B cell (primary cell): ENCODE measurements at regions of chr9 and their contacts with region 1.

Region 1: DNA sequence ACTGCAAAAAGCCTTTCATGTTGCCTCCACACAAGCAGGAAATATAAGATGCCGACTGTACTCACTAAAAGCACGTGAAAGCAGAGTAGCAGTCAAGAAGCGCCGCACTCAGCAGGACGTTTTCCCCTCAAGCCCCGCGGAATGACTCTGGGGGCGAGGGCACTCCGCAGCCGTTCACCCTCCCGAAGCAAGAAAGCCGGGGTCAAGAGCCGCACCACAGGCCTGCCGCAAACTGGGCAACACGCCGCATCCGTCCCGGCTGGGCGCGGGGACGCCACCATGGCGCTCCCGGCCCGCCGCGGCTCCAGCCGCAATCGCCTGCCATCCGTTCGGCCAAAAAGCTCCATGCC is 364 bp downstream of the RPS6 start:
- DNase-seq: no peak
- ATAC-seq: peak; percentile 41
- H3K4me3 ChIP-seq: peak overlapping the region; percentile 66 to 84 (median 81)
- H3K4me3 Mint-ChIP-seq: peak overlapping the region; percentile 98
- H3K27ac ChIP-seq: peak overlapping the region; percentile 87 to 93
- H3K27ac Mint-ChIP-seq: peak overlapping the region; percentile 98
- H3K4me1 ChIP-seq: peaks cover 19 to 20% of the 10 kb centered on the region in 2 donors
- H3K4me1 Mint-ChIP-seq: peaks cover 40% of the 10 kb centered on the region
- H3K27me3 ChIP-seq: no peaks in the 10 kb centered on the region
- H3K27me3 Mint-ChIP-seq: no peaks in the 10 kb centered on the region
- CTCF ChIP-seq: no peak

Region 2: GRCh38 chr9:19102631-19103345 is 276.9 kb before region 1 on chr9 and contains the start of gene HAUS6:
- CTCF ChIA-PET with region 1: no interaction called
- POLR2A ChIA-PET with region 1: interaction called, 4 read pairs
- intact Hi-C with region 1: loop called (anchors 1 kb)
- DNase-seq: peak; percentile 96
- ATAC-seq: peak; percentile 95
- H3K4me3 ChIP-seq: peak within 1 kb of the TSS; percentile 63 to 92 (median 82)
- H3K4me3 Mint-ChIP-seq: peak within 1 kb of the TSS; percentile 98
- H3K27ac ChIP-seq: peak within 1 kb of the TSS; percentile 53 to 88
- H3K27ac Mint-ChIP-seq: peak within 1 kb of the TSS; percentile 94
- H3K4me1 ChIP-seq: peaks cover 3 to 16% of the 10 kb centered on the region in 2 donors
- H3K4me1 Mint-ChIP-seq: peaks cover 22% of the 10 kb centered on the region
- H3K27me3 ChIP-seq: no peaks in the 10 kb centered on the region
- H3K27me3 Mint-ChIP-seq: no peaks in the 10 kb centered on the region
- CTCF ChIP-seq: peak; percentile 38
- total RNA-seq, gene HAUS6: 13.5 and 14.6 TPM in 2 replicates

Region 3: DNA sequence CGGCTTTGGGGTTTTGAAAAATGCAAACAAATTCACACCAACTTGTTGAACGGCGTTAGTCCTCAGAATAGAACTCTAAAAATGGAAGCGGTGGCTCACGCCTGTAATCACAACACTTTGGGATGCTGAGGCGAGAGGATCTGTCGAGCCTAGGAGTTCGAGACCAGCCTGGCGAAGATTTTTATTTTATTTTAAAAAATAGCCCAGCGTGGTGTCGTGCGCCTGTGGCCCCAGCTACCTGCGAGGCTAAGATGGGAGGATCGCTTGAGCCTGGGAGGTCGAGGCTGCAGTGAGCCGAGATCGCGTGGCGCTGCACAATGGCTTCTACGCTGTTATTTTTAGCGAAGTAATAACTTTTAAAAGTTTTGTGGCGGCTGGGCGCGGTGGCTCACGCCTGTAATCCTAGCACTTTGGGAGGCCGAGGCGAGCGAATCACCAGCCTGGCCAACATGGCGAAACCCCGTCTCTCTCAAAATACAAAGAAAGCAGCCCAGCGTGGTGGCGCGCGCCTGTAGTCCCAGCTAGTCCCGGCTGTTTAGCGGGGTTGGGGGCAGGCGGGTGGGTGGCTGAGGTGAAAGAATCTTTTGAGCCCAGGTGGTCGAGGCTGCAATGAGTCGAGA is 251.7 kb before region 1 on chr9:
- CTCF ChIA-PET with region 1: no interaction called
- POLR2A ChIA-PET with region 1: interaction called, 4 read pairs
- intact Hi-C with region 1: loop called (anchors 2 kb)
- DNase-seq: no peak
- ATAC-seq: peak; percentile 10
- H3K4me3 ChIP-seq: peak overlapping the region; percentile 72 to 82 (median 77)
- H3K4me3 Mint-ChIP-seq: peak overlapping the region; percentile 96
- H3K27ac ChIP-seq: peak overlapping the region; percentile 66 to 67
- H3K27ac Mint-ChIP-seq: peak overlapping the region; percentile 88
- H3K4me1 ChIP-seq: peaks cover 5 to 26% of the 10 kb centered on the region in 2 donors
- H3K4me1 Mint-ChIP-seq: peaks cover 28% of the 10 kb centered on the region
- H3K27me3 ChIP-seq: no peaks in the 10 kb centered on the region
- H3K27me3 Mint-ChIP-seq: no peaks in the 10 kb centered on the region
- CTCF ChIP-seq: no peak

Region 4: GRCh38 chr9:19230356-19231125 is 149.1 kb before region 1 on chr9 and contains the start of gene DENND4C:
- CTCF ChIA-PET with region 1: no interaction called
- POLR2A ChIA-PET with region 1: interaction called, 12 read pairs
- intact Hi-C with region 1: loop called (anchors 1 kb)
- DNase-seq: peak; percentile 87
- ATAC-seq: peak; percentile 76
- H3K4me3 ChIP-seq: peak within 1 kb of the TSS; percentile 79 to 89 (median 83)
- H3K4me3 Mint-ChIP-seq: no peak within 1 kb of the TSS
- H3K27ac ChIP-seq: peak within 1 kb of the TSS; percentile 28 to 72
- H3K27ac Mint-ChIP-seq: peak within 1 kb of the TSS; percentile 88
- H3K4me1 ChIP-seq: peaks cover 23 to 27% of the 10 kb centered on the region in 2 donors
- H3K4me1 Mint-ChIP-seq: peaks cover 15% of the 10 kb centered on the region
- H3K27me3 ChIP-seq: no peaks in the 10 kb centered on the region
- H3K27me3 Mint-ChIP-seq: no peaks in the 10 kb centered on the region
- CTCF ChIP-seq: no peak
- total RNA-seq, gene DENND4C: 44.8 and 52.4 TPM in 2 replicates

Region 5: DNA sequence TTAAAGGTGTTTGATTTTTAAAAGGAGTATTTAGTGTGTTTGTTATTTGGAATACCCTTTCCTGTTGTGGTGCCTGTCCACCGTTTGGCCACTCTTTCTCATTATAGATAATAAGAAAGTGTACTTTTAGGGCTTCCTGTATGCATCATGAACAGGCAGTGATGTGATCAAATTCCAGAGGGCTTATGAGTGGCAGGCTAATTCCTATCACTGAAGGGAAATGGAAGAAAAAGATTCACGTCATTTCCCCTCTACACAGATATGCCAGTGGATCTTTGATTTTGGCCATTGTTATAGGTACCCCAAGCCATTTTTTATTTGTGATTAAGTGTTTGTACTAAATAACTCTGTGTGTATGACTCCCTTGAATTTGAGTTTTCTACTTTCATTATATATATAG is 36.7 kb before region 1 on chr9:
- CTCF ChIA-PET with region 1: no interaction called
- POLR2A ChIA-PET with region 1: no interaction called
- intact Hi-C with region 1: no loop called
- DNase-seq: no peak
- ATAC-seq: no peak
- H3K4me3 ChIP-seq: no peak overlapping the region
- H3K4me3 Mint-ChIP-seq: no peak overlapping the region
- H3K27ac ChIP-seq: no peak overlapping the region
- H3K27ac Mint-ChIP-seq: no peak overlapping the region
- H3K4me1 ChIP-seq: no peaks in the 10 kb centered on the region
- H3K4me1 Mint-ChIP-seq: no peaks in the 10 kb centered on the region
- H3K27me3 ChIP-seq: no peaks in the 10 kb centered on the region
- H3K27me3 Mint-ChIP-seq: no peaks in the 10 kb centered on the region
- CTCF ChIP-seq: no peak

Region 6: DNA sequence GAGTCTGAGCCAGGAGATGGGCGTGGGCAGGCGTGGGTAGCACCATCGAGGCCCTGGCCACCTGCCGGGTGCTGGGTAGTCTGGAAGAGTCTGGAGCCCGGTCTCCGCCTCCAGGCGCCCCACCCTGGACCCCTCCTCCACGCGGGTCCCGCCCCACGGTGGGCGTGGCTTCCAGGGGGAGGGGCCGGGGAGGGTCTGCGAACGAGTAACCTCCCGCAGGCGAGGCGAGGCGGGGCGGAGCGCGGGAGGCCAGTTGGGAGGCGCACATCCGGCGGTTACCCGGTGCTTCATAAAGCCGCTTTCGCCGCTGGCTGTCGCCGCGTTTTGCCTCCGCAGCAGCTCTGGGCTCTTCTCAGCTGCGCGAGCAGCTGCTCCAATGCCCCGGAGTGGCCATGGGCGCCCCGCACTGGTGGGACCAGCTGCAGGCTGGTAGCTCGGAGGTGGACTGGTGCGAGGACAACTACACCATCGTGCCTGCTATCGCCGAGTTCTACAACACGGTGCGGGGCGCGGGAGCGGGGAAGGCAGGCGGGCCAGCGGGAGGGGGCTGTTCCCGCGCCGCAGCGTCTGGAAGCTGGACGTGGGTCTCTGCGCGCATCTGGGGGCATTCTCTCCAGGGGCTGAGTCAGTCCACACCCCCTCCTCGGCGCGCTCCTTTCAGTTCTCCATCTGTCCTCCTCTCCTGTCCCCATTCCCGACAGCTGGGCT is 29.2 kb after region 1 on chr9 and contains the start of gene ACER2:
- CTCF ChIA-PET with region 1: no interaction called
- POLR2A ChIA-PET with region 1: interaction called, 7 read pairs
- intact Hi-C with region 1: loop called (anchors 1 kb)
- DNase-seq: peak; percentile 92
- ATAC-seq: peak; percentile 97
- H3K4me3 ChIP-seq: peak within 1 kb of the TSS; percentile 77 to 94 (median 92)
- H3K4me3 Mint-ChIP-seq: peak within 1 kb of the TSS; percentile 94
- H3K27ac ChIP-seq: peak within 1 kb of the TSS; percentile 31 to 51
- H3K27ac Mint-ChIP-seq: peak within 1 kb of the TSS; percentile 86
- H3K4me1 ChIP-seq: peaks cover 12 to 15% of the 10 kb centered on the region in 2 donors
- H3K4me1 Mint-ChIP-seq: peaks cover 12% of the 10 kb centered on the region
- H3K27me3 ChIP-seq: no peaks in the 10 kb centered on the region
- H3K27me3 Mint-ChIP-seq: no peaks in the 10 kb centered on the region
- CTCF ChIP-seq: no peak
- total RNA-seq, gene ACER2: 5.5 and 6.1 TPM in 2 replicates

Region 7: DNA sequence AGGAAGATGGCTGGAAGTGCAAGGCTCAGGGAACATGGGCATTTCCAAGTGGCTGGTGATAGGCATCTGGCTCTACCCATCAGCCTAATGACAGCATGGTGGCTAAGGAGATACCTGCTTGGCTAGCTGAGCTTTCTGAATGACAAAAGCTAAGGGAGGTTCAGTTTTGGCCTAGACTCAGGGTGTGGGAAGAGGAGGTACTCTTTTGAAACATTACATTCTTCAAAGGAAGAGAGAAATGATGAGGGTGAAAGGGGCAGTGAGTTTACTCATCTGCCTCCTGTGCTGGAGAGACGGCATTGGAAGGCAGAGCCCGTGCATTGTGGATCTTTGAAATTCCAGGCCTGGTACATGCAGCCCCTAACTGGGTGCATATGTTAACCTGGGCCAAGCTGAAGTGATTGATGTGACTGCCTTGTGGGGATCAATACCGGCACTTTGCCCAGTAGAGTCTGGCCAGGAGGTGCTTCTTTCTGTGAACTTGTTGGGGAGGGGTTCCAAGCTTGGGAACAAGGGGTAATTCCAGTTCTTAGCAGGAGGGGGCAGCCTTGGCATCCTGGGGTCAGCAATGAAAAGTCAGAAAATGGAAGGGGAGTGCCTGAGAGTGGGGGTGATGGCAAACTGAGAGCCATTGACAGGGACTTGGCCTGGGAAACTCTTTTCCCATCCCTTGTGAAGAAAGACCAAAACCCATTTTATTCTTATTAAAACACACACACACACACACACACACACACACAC is 137.7 kb after region 1 on chr9:
- CTCF ChIA-PET with region 1: no interaction called
- POLR2A ChIA-PET with region 1: no interaction called
- intact Hi-C with region 1: no loop called
- DNase-seq: no peak
- ATAC-seq: no peak
- H3K4me3 ChIP-seq: no peak overlapping the region
- H3K4me3 Mint-ChIP-seq: no peak overlapping the region
- H3K27ac ChIP-seq: no peak overlapping the region
- H3K27ac Mint-ChIP-seq: no peak overlapping the region
- H3K4me1 ChIP-seq: no peaks in the 10 kb centered on the region
- H3K4me1 Mint-ChIP-seq: no peaks in the 10 kb centered on the region
- H3K27me3 ChIP-seq: no peaks in the 10 kb centered on the region
- H3K27me3 Mint-ChIP-seq: no peaks in the 10 kb centered on the region
- CTCF ChIP-seq: no peak

Region 8: GRCh38 chr9:19741178-19741577 is 361.5 kb after region 1 on chr9:
- CTCF ChIA-PET with region 1: no interaction called
- POLR2A ChIA-PET with region 1: no interaction called
- intact Hi-C with region 1: no loop called
- DNase-seq: no peak
- ATAC-seq: no peak
- H3K4me3 ChIP-seq: no peak overlapping the region
- H3K4me3 Mint-ChIP-seq: no peak overlapping the region
- H3K27ac ChIP-seq: no peak overlapping the region
- H3K27ac Mint-ChIP-seq: no peak overlapping the region
- H3K4me1 ChIP-seq: no peaks in the 10 kb centered on the region
- H3K4me1 Mint-ChIP-seq: no peaks in the 10 kb centered on the region
- H3K27me3 ChIP-seq: no peaks in the 10 kb centered on the region
- H3K27me3 Mint-ChIP-seq: peaks cover 6% of the 10 kb centered on the region
- CTCF ChIP-seq: no peak